CD4-positive, alpha-beta memory T cell (primary cell): ENCODE measurements at regions of chr2 and their contacts with region 1.

Region 1: DNA sequence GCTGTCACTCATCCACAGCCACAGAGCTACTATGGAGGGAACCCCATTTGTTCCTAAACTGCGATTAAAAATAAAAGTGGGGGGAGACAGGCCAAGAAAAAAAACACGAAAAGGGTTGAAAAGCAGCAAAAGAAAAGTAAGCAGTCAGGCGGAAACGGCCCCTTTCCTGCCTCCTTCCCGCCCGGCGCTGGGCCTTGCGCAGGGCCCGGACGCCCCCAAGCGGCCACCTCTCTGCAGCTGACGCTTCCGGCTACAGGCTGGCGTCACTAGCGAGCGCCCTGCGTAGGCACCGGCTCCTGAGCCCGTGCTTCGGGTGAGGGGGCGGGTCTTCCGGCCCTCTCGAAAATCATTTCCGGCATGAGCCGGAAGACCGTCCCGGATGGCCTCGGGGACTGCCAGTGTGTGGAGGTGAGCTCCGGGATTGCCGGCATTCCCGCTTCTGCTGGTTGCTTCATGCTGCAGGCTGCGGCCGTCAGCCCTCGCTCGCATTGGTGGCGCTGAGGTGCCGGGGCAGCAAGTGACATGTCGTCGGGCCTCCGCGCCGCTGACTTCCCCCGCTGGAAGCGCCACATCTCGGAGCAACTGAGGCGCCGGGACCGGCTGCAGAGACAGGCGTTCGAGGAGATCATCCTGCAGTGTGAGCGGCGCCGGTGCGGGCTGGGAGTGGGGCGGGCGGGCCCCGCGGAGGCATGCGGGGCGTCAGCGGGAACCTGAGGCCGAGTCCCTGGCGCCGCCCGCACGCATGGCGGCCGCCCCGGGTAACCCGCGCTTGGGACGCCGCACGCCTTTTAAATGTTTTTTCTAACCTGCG is at the start of gene ATG16L1:
- DNase-seq: peak; percentile 93 to 96 (median 95)
- H3K4me3 ChIP-seq: peak within 1 kb of the TSS; percentile 96 to 98
- H3K4me3 Mint-ChIP-seq: peak within 1 kb of the TSS; percentile 90 to 94 (median 93)
- H3K27ac ChIP-seq: peak within 1 kb of the TSS; percentile 89
- H3K27ac Mint-ChIP-seq: peak within 1 kb of the TSS; percentile 94 to 98 (median 98)
- H3K4me1 ChIP-seq: peaks cover 84% of the 10 kb centered on the region
- H3K4me1 Mint-ChIP-seq: peaks cover 57 to 83% (median 68%) of the 10 kb centered on the region in 4 donors
- H3K27me3 ChIP-seq: no peaks in the 10 kb centered on the region
- H3K27me3 Mint-ChIP-seq: no peaks in the 10 kb centered on the region
- total RNA-seq, gene ATG16L1: 81.1 to 89.4 TPM

Region 2: GRCh38 chr2:232611551-232612218 is 639.8 kb before region 1 on chr2:
- CTCF ChIA-PET with region 1: interaction called, 10 read pairs
- POLR2A ChIA-PET with region 1: no interaction called
- intact Hi-C with region 1: loop called (anchors 1 kb)
- DNase-seq: peak; percentile 42 to 58 (median 47)
- H3K4me3 ChIP-seq: no peak overlapping the region
- H3K4me3 Mint-ChIP-seq: no peak overlapping the region
- H3K27ac ChIP-seq: no peak overlapping the region
- H3K27ac Mint-ChIP-seq: no peak overlapping the region
- H3K4me1 ChIP-seq: no peaks in the 10 kb centered on the region
- H3K4me1 Mint-ChIP-seq: peaks cover 0 to 2% (median 0%) of the 10 kb centered on the region in 4 donors
- H3K27me3 ChIP-seq: no peaks in the 10 kb centered on the region
- H3K27me3 Mint-ChIP-seq: peaks cover 0 to 3% of the 10 kb centered on the region in 2 donors

Region 3: GRCh38 chr2:232761301-232761907 is 490.1 kb before region 1 on chr2:
- CTCF ChIA-PET with region 1: interaction called, 3 read pairs
- POLR2A ChIA-PET with region 1: no interaction called
- intact Hi-C with region 1: loop called (anchors 1 kb)
- DNase-seq: peak; percentile 33 to 50 (median 45)
- H3K4me3 ChIP-seq: no peak overlapping the region
- H3K4me3 Mint-ChIP-seq: no peak overlapping the region
- H3K27ac ChIP-seq: no peak overlapping the region
- H3K27ac Mint-ChIP-seq: no peak overlapping the region
- H3K4me1 ChIP-seq: peaks cover 16% of the 10 kb centered on the region
- H3K4me1 Mint-ChIP-seq: peaks cover 14 to 28% (median 21%) of the 10 kb centered on the region in 4 donors
- H3K27me3 ChIP-seq: no peaks in the 10 kb centered on the region
- H3K27me3 Mint-ChIP-seq: no peaks in the 10 kb centered on the region

Region 4: DNA sequence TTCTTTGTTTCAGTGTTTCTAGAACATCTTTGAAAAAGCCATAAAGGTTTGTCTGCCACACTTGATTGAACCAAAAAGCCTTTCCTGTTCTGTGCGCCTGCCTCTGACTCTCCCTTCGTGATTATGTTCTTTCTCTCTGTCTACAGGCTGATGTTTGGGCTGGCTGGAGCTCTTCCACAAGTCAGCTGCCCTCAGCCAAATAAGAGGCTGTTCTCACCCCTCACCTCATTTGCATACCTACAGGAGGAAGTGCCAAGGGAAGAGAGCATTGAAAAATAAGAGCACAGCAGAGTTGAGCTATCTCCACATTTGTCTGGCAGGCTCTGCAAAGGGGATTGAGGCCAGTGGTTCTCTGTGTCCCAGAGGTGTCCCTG is 175.6 kb before region 1 on chr2:
- CTCF ChIA-PET with region 1: interaction called, 5 read pairs
- POLR2A ChIA-PET with region 1: interaction called, 10 read pairs
- intact Hi-C with region 1: loop called (anchors 5 kb)
- DNase-seq: peak; percentile 45 to 69 (median 50)
- H3K4me3 ChIP-seq: peak overlapping the region; percentile 9 to 41
- H3K4me3 Mint-ChIP-seq: no peak overlapping the region
- H3K27ac ChIP-seq: peak overlapping the region; percentile 44
- H3K27ac Mint-ChIP-seq: no peak overlapping the region
- H3K4me1 ChIP-seq: peaks cover 92% of the 10 kb centered on the region
- H3K4me1 Mint-ChIP-seq: peaks cover 37 to 42% (median 41%) of the 10 kb centered on the region in 4 donors
- H3K27me3 ChIP-seq: no peaks in the 10 kb centered on the region
- H3K27me3 Mint-ChIP-seq: peaks cover 0 to 1% of the 10 kb centered on the region in 2 donors

Region 5: DNA sequence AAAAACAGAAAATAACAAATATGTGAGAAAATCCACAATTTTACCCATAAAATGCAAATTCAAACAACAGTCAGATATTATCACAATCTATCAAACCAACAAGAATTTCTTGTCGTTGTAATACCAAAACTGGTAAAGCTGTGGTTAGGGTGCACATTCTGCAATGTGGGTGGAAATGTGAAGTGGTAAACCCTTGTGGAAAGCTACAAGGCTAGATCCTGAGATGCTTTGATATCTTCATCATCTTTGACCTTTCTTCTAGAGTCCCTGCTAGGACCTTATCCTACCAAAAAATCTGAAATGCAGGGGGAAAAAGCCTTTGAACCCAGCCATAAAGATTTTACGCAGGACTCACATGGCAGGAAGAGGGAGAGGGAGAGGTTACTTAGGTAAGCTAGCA is 17.2 kb before region 1 on chr2:
- CTCF ChIA-PET with region 1: interaction called, 28 read pairs
- POLR2A ChIA-PET with region 1: interaction called, 33 read pairs
- intact Hi-C with region 1: no loop called
- DNase-seq: peak in 1 of 5 donors; percentile 46
- H3K4me3 ChIP-seq: no peak overlapping the region
- H3K4me3 Mint-ChIP-seq: peak overlapping the region in 7 of 8 donors; percentile 44 to 70 (median 51)
- H3K27ac ChIP-seq: peak overlapping the region; percentile 14
- H3K27ac Mint-ChIP-seq: peak overlapping the region in 6 of 7 donors; percentile 71 to 86 (median 74)
- H3K4me1 ChIP-seq: peaks cover 63% of the 10 kb centered on the region
- H3K4me1 Mint-ChIP-seq: peaks cover 36 to 61% (median 51%) of the 10 kb centered on the region in 4 donors
- H3K27me3 ChIP-seq: no peaks in the 10 kb centered on the region
- H3K27me3 Mint-ChIP-seq: no peaks in the 10 kb centered on the region

Region 6: GRCh38 chr2:233275223-233275622 is 23.7 kb after region 1 on chr2:
- CTCF ChIA-PET with region 1: interaction called, 18 read pairs
- POLR2A ChIA-PET with region 1: interaction called, 162 read pairs
- intact Hi-C with region 1: no loop called
- DNase-seq: no peak
- H3K4me3 ChIP-seq: no peak overlapping the region
- H3K4me3 Mint-ChIP-seq: no peak overlapping the region
- H3K27ac ChIP-seq: no peak overlapping the region
- H3K27ac Mint-ChIP-seq: peak overlapping the region in 5 of 7 donors; percentile 6 to 78 (median 51)
- H3K4me1 ChIP-seq: peaks cover 34% of the 10 kb centered on the region
- H3K4me1 Mint-ChIP-seq: peaks cover 25 to 46% (median 36%) of the 10 kb centered on the region in 4 donors
- H3K27me3 ChIP-seq: no peaks in the 10 kb centered on the region
- H3K27me3 Mint-ChIP-seq: no peaks in the 10 kb centered on the region